Cardiac septum (tissue), 1 donor: ENCODE measurements at regions of chr4 and their contacts with region 1.

Region 1: GRCh38 chr4:40309250-40309774 is 25.8 kb upstream of the CHRNA9 start:
- DNase-seq: peak; percentile 93

Region 2: DNA sequence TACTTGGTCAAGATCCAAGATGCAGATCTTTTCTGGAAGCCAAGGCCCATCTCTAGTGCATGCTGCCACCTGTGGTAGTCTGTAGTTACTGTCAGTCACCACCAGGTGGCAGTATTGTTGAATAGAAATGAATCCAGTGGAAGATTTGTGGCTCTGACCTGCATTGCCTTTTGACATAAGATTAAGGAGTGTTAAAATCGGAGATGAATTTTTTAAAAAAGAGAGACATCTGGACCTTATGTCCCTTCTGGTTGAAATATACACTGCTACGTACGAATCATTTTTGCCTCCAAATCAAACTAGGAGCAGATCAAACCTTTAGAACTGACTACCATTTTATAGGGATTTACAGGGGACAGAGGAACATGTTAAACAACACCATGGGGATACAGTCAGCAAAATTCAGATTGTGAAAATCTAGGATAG is 159.3 kb before region 1 on chr4:
- intact Hi-C with region 1: loop called (anchors 5 kb)
- DNase-seq: no peak

Region 3: GRCh38 chr4:40550948-40551462 is 241.7 kb after region 1 on chr4:
- intact Hi-C with region 1: no loop called
- DNase-seq: no peak